Stomach (tissue), 19 donors: ENCODE measurements at regions of chr9 and their contacts with region 1.

Region 1: DNA sequence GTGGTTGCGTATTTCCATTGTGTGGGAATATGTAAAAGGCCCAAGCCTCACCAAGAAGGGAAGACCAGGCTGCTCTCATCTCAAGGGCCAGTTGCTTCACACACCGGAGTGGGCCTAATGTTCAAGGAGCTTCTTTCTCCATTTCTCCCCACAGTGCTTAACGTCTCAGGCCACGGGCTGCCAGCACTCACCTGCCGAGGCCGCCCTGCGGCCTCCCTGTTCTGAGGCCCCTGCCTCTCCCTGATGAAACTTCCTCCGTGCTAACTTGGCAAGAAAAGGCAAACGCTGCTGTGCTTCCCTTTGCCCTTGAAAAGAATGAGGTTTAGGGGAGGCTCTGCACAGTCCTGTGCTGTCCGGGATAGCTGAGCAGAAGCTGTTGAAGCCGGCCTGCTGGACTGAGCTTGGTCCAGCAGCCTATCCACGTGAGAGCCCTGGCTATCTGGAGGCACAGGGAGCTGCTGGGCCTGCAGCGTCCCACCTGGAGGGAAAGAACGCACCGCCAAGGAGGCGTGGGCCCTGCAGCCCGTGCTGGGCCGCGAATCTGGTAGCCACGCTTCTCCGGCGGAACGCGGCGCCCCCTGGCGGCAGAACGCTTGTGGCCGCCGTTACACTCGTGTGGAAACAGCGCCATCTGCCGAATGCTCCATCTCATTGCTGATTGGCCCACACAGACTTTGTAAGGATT is 73.5 kb upstream of the PRSS3 start:
- DNase-seq: peak; percentile 92 to 94
- H3K4me3 ChIP-seq: no peak overlapping the region
- H3K27ac ChIP-seq: no peak overlapping the region
- H3K4me1 ChIP-seq: peaks cover 0 to 21% (median 3%) of the 10 kb centered on the region in 4 donors
- H3K27me3 ChIP-seq: peaks cover 0 to 12% (median 4%) of the 10 kb centered on the region in 3 donors
- CTCF ChIP-seq: peak in 6 of 7 experiments; percentile 85 to 100 (median 99)
- EP300 ChIP-seq: no peak
- POLR2A ChIP-seq: no peak

Region 2: GRCh38 chr9:33623658-33624586 is 97.9 kb before region 1 on chr9:
- intact Hi-C with region 1: loop called (anchors 5 kb)
- DNase-seq: peak; percentile 66 to 87
- H3K4me3 ChIP-seq: no peak overlapping the region
- H3K27ac ChIP-seq: no peak overlapping the region
- H3K4me1 ChIP-seq: peaks cover 0 to 12% (median 3%) of the 10 kb centered on the region in 4 donors
- H3K27me3 ChIP-seq: peaks cover 0 to 31% (median 7%) of the 10 kb centered on the region in 3 donors
- CTCF ChIP-seq: peak in 5 of 7 experiments; percentile 39 to 85 (median 77)
- EP300 ChIP-seq: no peak
- POLR2A ChIP-seq: peak in 1 of 4 donors; percentile 8

Region 3: DNA sequence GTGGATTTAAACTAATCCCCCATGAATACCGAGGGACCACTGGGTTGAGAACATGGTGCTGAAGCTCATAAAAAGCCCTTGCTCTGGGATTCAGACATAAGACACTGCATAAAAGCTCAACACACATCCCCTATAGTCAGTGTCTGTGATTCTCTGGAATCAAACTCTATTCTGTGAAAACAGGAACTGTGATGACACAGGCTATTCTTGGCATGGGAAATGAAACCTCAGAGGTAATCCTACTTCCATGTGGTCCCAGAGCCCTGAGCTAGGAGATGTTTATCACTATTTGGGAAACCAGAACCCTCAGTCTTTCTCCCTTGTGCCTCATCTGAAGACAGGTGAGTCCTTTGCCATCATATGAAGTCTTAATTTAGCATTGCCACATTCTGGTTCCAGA is 61.9 kb before region 1 on chr9:
- intact Hi-C with region 1: no loop called
- DNase-seq: no peak
- H3K4me3 ChIP-seq: no peak overlapping the region
- H3K27ac ChIP-seq: no peak overlapping the region
- H3K4me1 ChIP-seq: no peaks in the 10 kb centered on the region
- H3K27me3 ChIP-seq: peaks cover 0 to 3% (median 0%) of the 10 kb centered on the region in 3 donors
- CTCF ChIP-seq: no peak
- EP300 ChIP-seq: no peak
- POLR2A ChIP-seq: no peak

Region 4: GRCh38 chr9:34010979-34011378 is 289.2 kb after region 1 on chr9:
- intact Hi-C with region 1: no loop called
- DNase-seq: peak in 1 of 2 donors; percentile 30
- H3K4me3 ChIP-seq: no peak overlapping the region
- H3K27ac ChIP-seq: no peak overlapping the region
- H3K4me1 ChIP-seq: no peaks in the 10 kb centered on the region
- H3K27me3 ChIP-seq: no peaks in the 10 kb centered on the region
- CTCF ChIP-seq: no peak
- EP300 ChIP-seq: no peak
- POLR2A ChIP-seq: no peak